ENCODE measurements at regions of chr1 and their contacts with region 1.

Region 1: DNA sequence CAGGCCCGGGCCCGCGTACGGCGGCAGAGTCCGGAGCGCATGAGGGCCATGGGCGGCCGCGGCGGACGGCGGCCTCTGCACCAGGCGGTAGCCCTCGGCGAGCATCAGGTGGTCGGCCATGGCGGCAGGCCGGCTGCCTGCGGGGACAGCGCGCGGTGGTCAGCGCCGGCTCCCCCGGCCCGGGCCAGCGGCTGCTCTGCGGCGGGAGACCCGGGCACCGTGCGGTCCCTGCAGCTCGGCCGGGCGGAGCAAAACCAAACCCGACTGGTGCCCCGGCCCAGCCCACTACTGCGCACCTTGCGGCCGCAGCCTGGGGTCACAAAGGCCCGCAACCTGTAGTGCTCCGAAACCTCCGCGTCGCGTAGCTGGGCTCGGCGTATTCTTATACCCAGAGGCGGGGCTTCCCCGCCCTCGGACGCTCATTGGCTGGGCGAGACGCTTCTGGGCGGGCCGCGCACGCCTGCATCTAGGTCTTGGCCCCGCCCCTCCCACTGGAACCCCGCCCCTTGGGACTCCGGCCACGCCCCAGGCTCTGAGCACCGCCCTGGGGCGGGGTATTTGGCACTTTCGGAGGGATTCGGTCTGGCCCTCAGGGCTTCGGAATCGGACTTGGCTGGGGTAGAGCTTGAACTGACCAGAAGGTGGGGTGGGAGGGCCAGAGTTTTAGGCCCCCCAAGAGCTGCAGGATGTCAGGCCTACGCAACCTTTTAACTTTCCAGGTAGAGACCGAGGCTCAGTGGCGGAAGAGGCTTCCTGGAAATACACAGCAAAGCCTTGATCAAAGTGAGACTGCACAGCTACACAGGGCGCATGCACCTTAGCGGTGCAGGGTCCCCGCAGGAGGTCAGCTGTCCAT is at the start of gene CITED4:
- DNase-seq: peak; percentile 95
- H3K4me3 Mint-ChIP-seq: peak within 1 kb of the TSS; percentile 82
- H3K27ac Mint-ChIP-seq: peak within 1 kb of the TSS; percentile 97
- H3K4me1 Mint-ChIP-seq: peaks cover 22% of the 10 kb centered on the region
- H3K27me3 Mint-ChIP-seq: peaks cover 31% of the 10 kb centered on the region
- total RNA-seq, gene CITED4: 4.1 to 6.8 TPM

Region 2: DNA sequence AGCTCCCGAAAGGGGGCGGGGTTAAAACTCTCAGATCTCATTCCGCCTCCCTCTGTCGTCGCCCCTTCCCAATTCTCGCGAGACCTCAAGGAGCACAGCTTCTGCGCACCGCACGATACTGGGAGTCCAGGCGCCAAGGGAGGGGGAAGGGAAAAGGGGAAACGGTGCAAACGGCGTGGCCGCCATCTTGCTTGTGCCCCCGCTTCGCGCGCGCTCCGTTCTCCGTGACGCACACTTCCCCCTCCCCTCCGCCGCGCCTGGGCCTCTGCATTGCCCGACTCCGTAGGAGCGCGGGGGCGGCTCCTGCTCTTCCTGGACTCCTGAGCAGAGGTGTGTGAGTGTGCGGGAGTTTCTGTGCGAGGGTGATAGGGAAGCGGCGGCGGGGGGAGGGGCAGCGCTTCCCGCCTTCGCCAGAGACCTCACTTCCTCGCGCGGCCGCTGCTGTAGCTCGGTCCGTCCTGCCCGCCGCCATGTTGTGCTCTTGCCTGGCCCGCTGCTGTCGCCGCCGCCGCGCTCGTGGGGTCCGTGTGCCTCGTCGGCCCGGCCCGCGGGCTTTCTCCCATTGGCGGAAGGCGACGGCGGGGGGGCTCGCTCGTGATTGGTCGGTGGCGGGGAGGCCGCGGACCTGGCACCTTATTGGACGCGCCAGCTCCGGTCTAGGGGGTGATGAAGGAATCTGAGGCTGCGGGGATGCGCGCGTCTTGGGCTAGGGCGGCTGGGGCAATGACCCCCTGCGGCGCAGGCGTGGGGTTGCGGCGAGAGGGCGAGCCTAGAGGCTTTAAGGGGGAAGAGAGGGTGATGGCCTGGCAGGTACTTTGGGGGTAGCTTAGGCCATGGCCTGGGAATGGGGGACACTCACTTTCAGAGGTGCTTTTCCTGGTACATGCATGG is 170.5 kb before region 1 on chr1 and contains the start of gene NFYC:
- CTCF ChIA-PET with region 1: no interaction called
- POLR2A ChIA-PET with region 1: no interaction called
- DNase-seq: peak; percentile 98
- H3K4me3 Mint-ChIP-seq: peak within 1 kb of the TSS; percentile 97
- H3K27ac Mint-ChIP-seq: peak within 1 kb of the TSS; percentile 98
- H3K4me1 Mint-ChIP-seq: peaks cover 60% of the 10 kb centered on the region
- H3K27me3 Mint-ChIP-seq: no peaks in the 10 kb centered on the region
- total RNA-seq, gene NFYC: 85.7 to 99.2 TPM

Region 3: GRCh38 chr1:40840526-40841323 is 21.5 kb before region 1 on chr1:
- CTCF ChIA-PET with region 1: no interaction called
- POLR2A ChIA-PET with region 1: no interaction called
- DNase-seq: peak; percentile 68
- H3K4me3 Mint-ChIP-seq: peak overlapping the region; percentile 12
- H3K27ac Mint-ChIP-seq: peak overlapping the region; percentile 85
- H3K4me1 Mint-ChIP-seq: peaks cover 36% of the 10 kb centered on the region
- H3K27me3 Mint-ChIP-seq: no peaks in the 10 kb centered on the region

Region 4: DNA sequence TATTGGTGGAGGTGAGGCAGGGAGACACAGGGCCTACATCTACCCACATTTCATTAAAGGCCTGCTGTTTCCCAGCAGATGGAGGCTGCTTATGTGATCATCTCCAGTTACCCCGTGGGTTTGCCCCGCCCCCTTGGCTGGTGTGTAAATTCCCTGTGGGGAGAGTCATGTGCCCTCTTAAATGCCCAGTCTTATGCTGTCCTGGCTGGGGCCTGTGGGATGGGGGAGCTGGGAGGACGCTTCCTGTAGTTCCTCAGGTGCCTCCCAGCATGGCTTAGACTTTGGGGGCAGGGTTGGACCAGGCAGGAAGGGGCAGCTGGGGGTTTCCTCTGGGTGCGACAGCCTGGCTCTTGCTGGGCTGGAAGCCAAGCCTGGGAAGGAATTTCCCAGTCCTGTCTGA is 15.5 kb after region 1 on chr1:
- CTCF ChIA-PET with region 1: interaction called, 15 read pairs
- POLR2A ChIA-PET with region 1: interaction called, 5 read pairs
- DNase-seq: no peak
- H3K4me3 Mint-ChIP-seq: no peak overlapping the region
- H3K27ac Mint-ChIP-seq: peak overlapping the region; percentile 25
- H3K4me1 Mint-ChIP-seq: peaks cover 38% of the 10 kb centered on the region
- H3K27me3 Mint-ChIP-seq: peaks cover 7% of the 10 kb centered on the region

Region 5: DNA sequence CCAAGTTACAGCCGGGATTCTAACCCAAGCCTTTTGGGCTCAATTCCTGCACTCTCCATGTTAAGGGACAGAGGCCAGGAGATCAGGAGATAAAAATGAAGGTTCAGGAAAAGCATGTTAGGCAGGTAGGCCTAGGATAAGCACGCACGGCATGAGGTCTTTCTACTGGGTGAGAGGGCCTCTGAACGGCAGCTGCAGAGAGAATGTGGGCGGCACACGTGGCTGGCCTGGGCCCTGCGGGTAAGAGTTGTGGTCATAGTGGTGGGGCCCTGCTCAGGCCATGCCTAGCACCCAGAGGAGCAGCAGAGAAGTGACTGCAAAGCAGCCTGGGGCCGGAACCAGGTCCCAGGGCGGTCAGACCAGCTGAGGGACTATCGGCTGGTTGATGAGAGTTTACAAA is 491.5 kb after region 1 on chr1:
- CTCF ChIA-PET with region 1: no interaction called
- POLR2A ChIA-PET with region 1: no interaction called
- DNase-seq: no peak
- H3K4me3 Mint-ChIP-seq: no peak overlapping the region
- H3K27ac Mint-ChIP-seq: no peak overlapping the region
- H3K4me1 Mint-ChIP-seq: no peaks in the 10 kb centered on the region
- H3K27me3 Mint-ChIP-seq: peaks cover 9% of the 10 kb centered on the region

Measured in activated CD4-positive, alpha-beta T cell treated with anti-CD3 and anti-CD28 coated beads, Interleukin-2, amount 10 ng/mL, durations not matched to agents 7 days and 5 days (primary cell).